Mucosa of descending colon (tissue), 3 donors: ENCODE measurements at regions of chr10 and their contacts with region 1.

Region 1: GRCh38 chr10:51244748-51245490 is 170.6 kb downstream of the PRKG1 start:
- DNase-seq: no peak
- ATAC-seq: peak; percentile 84
- H3K4me3 ChIP-seq: no peak overlapping the region
- H3K4me1 ChIP-seq: no peaks in the 10 kb centered on the region
- CTCF ChIP-seq: no peak

Region 2: GRCh38 chr10:51297438-51297837 is 52.5 kb after region 1 on chr10:
- intact Hi-C with region 1: loop called in 1 of 2 experiments (anchors 10 kb)
- DNase-seq: no peak
- ATAC-seq: no peak
- H3K4me3 ChIP-seq: no peak overlapping the region
- H3K4me1 ChIP-seq: no peaks in the 10 kb centered on the region
- CTCF ChIP-seq: no peak